HCT116 (cell line): ENCODE measurements at regions of chr22 and their contacts with region 1.

Region 1: DNA sequence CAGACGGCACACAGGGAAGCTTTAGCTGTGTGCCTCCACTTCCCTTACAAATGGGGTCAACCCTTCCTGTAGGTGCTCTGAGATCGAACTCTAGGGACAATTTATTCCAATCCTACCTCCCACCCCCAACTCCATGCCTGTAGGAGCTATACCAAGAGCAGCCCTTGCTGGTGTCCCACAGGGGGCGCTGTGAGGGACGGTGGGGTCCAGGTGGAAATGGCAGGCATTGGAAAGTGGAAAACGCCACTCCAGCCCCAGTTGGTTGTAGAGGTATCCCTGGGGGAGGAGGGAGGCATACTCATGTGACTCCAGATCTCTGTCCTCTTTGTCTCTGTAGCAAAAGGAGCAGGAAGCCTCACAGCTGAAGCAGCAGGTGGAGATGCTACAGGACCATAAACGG is 161.3 kb downstream of the MYO18B start:
- DNase-seq: peak; percentile 7
- ATAC-seq: peak; percentile 69; the same call in 1 of the 2 replicates
- H3K4me3 ChIP-seq: no peak overlapping the region
- H3K27ac ChIP-seq: no peak overlapping the region
- H3K4me1 ChIP-seq: no peaks in the 10 kb centered on the region
- H3K27me3 ChIP-seq: peaks cover 28% of the 10 kb centered on the region
- CTCF ChIP-seq: peak in 2 of 3 experiments; percentile 72 to 77; a peak in 4 of 6 replicates
- POLR2A ChIP-seq: no peak
- RAD21 ChIP-seq: no peak

Region 2: GRCh38 chr22:25928038-25928437 is 24.7 kb after region 1 on chr22:
- CTCF ChIA-PET with region 1: interaction called, 11 read pairs
- POLR2A ChIA-PET with region 1: no interaction called
- RAD21 ChIA-PET with region 1: no interaction called
- intact Hi-C with region 1: no loop called
- DNase-seq: no peak
- ATAC-seq: no peak
- H3K4me3 ChIP-seq: no peak overlapping the region
- H3K27ac ChIP-seq: no peak overlapping the region
- H3K4me1 ChIP-seq: no peaks in the 10 kb centered on the region
- H3K27me3 ChIP-seq: peaks cover 48% of the 10 kb centered on the region
- CTCF ChIP-seq: no peak
- POLR2A ChIP-seq: no peak
- RAD21 ChIP-seq: no peak

Region 3: GRCh38 chr22:26008587-26008986 is 105.3 kb after region 1 on chr22:
- CTCF ChIA-PET with region 1: no interaction called
- POLR2A ChIA-PET with region 1: no interaction called
- RAD21 ChIA-PET with region 1: no interaction called
- intact Hi-C with region 1: no loop called
- DNase-seq: no peak
- ATAC-seq: no peak
- H3K4me3 ChIP-seq: no peak overlapping the region
- H3K27ac ChIP-seq: no peak overlapping the region
- H3K4me1 ChIP-seq: no peaks in the 10 kb centered on the region
- H3K27me3 ChIP-seq: peaks cover 20% of the 10 kb centered on the region
- CTCF ChIP-seq: no peak
- POLR2A ChIP-seq: no peak
- RAD21 ChIP-seq: no peak